GM18951 (cell line): ENCODE measurements at regions of chrX and their contacts with region 1.

Region 1: GRCh38 chrX:149939796-149940673 is 1.7 kb upstream of the EOLA2 start:
- POLR2A ChIP-seq: peak; percentile 29

Region 2: GRCh38 chrX:149079805-149080406 is 860.1 kb before region 1 on chrX:
- in situ Hi-C with region 1: no loop called
- POLR2A ChIP-seq: no peak

Region 3: DNA sequence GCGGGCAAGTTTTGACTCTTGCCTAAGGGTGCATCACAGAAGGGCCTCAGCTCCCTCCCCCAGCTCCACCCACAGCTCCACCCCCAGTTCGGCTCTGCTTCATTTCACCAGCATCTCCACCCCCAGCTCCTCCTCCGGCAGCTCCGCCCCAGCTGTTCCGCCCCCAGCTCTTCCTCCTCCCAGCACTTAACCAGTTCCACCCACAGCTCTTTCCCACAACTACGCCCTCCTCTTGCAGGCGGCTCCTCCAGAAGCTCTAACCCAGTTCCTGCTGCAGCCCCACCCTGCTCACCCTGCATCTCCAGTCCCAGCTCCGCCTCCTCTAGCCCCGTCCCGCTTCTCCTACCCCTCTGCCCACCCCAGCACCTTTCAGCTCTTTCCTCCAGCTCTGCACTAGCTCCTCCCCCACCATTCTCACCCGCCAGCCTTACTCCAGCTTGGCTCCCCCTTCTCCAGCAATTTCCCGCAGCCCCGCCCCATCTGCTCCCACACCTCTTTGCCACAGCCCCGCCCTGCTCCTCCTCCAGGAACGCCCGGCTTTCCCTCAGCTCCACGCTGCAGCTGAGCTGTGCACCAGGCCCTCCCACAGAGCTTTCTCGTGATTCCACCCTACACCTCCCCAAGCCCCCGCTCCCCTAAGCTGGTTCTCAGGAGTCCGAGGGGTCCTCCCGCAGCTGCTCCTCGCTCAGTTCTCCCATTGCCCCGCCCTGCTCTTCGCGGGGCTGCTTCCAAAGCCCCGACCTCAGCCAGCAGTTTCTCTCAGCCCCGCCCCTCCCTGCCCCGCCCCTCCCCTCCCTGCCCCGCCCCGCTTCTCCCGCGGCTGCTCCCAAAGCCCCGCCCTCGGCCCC is 400.5 kb before region 1 on chrX:
- in situ Hi-C with region 1: loop called (anchors 10 kb)
- POLR2A ChIP-seq: peak; percentile 26